Heart right ventricle (tissue), 16 donors: ENCODE measurements at regions of chr13 and their contacts with region 1.

Region 1: GRCh38 chr13:58767566-58767965 is 1136.0 kb downstream of the PCDH17 start:
- DNase-seq: no peak
- ATAC-seq: no peak
- H3K4me3 ChIP-seq: no peak overlapping the region
- H3K27ac ChIP-seq: no peak overlapping the region
- H3K4me1 ChIP-seq: peaks cover 0 to 18% (median 4%) of the 10 kb centered on the region in 9 donors
- H3K27me3 ChIP-seq: no peaks in the 10 kb centered on the region
- CTCF ChIP-seq: no peak

Region 2: DNA sequence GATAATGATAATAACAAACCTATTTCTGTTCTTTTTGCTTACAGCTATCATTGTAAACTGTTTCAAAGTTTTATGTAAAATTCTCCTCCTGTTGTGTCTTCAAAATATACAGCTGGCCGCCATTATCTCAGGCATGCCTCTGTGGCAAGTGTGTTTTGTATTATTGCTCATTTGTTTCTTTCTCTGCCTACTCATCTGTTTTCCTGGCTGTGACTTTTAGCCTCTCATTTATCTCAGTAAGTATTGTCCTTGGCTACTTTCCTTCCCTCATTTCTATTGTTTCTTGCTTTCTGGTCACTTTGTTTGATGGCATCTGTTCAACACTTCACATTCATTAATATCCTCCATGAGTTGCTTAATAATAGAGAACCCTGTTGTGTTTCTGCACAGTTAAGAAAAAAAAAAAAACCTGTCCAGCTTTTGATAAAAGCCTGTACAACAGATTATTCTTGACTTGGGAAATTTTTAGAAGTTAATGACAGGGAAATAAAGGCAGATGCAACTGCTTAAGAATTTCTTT is 266.6 kb before region 1 on chr13:
- intact Hi-C with region 1: no loop called
- DNase-seq: no peak
- ATAC-seq: no peak
- H3K4me3 ChIP-seq: no peak overlapping the region
- H3K27ac ChIP-seq: no peak overlapping the region
- H3K4me1 ChIP-seq: no peaks in the 10 kb centered on the region
- H3K27me3 ChIP-seq: no peaks in the 10 kb centered on the region
- CTCF ChIP-seq: no peak

Region 3: DNA sequence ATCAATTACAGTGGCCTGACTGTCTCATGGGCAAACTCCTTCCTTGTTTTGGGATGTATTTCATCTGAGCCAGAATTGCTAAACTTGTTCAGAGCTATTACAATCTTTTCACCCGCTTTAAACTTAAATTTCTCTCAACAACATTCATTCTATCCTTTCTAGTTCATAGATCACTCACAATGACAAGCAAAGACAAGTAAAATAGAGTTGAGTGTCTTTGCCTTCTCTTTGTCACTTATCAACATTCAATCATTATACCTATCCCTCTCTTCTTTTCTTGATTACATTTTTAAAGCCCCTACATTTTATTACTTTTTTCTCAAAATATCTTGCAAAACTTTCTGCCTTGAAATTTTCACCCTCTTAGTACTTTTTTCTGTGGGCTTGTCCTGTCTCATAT is 22.9 kb before region 1 on chr13:
- intact Hi-C with region 1: loop called in 1 of 10 experiments (anchors 2 kb)
- DNase-seq: no peak
- ATAC-seq: no peak
- H3K4me3 ChIP-seq: no peak overlapping the region
- H3K27ac ChIP-seq: no peak overlapping the region
- H3K4me1 ChIP-seq: no peaks in the 10 kb centered on the region
- H3K27me3 ChIP-seq: no peaks in the 10 kb centered on the region
- CTCF ChIP-seq: no peak